ENCODE measurements at regions of chr4 and their contacts with region 1.

Region 1: DNA sequence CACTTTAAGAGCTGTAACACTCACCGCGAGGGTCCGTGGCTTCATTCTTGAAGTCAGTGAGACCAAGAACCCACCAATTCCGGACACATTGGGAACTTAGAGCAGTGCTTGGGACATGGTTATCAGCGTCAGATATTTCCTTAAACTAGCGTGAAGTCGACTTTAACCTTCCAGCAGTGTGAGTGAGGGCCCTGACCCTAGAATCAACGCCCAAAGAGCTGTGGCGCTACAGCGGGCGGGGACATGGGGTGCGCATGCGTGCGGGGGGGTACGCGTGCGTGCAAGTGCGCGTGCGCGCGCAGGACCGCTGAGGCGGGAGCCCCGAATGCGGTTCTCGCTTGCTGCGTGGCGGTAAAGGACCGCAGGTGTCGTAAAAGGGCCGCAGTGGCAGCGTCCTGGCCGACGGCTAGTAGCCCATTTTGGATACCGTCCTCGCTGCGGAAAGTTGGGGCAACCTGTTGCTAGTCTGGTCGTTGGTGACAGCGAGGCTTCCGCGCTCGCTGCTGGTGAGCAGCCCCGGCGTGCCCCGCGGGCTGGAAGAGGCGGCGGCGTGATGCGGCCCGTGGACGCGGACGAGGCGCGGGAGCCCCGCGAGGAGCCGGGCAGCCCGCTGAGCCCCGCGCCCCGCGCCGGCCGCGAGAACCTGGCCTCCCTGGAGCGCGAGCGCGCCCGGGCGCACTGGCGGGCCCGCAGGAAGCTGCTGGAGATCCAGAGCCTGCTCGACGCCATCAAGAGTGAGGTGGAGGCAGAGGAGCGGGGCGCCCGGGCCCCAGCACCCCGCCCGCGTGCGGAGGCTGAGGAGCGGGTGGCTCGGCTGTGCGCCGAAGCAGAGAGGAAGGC is 19.8 kb upstream of the S100P start:
- DNase-seq: peak; percentile 96

Region 2: GRCh38 chr4:6574747-6575502 is 99.0 kb before region 1 on chr4 and contains the start of gene MAN2B2:
- intact Hi-C with region 1: loop called (anchors 10 kb)
- DNase-seq: peak; percentile 95
- total RNA-seq, gene MAN2B2: 18.6 TPM

Region 3: GRCh38 chr4:6608758-6609414 is 65.0 kb before region 1 on chr4:
- intact Hi-C with region 1: no loop called
- DNase-seq: no peak

Region 4: DNA sequence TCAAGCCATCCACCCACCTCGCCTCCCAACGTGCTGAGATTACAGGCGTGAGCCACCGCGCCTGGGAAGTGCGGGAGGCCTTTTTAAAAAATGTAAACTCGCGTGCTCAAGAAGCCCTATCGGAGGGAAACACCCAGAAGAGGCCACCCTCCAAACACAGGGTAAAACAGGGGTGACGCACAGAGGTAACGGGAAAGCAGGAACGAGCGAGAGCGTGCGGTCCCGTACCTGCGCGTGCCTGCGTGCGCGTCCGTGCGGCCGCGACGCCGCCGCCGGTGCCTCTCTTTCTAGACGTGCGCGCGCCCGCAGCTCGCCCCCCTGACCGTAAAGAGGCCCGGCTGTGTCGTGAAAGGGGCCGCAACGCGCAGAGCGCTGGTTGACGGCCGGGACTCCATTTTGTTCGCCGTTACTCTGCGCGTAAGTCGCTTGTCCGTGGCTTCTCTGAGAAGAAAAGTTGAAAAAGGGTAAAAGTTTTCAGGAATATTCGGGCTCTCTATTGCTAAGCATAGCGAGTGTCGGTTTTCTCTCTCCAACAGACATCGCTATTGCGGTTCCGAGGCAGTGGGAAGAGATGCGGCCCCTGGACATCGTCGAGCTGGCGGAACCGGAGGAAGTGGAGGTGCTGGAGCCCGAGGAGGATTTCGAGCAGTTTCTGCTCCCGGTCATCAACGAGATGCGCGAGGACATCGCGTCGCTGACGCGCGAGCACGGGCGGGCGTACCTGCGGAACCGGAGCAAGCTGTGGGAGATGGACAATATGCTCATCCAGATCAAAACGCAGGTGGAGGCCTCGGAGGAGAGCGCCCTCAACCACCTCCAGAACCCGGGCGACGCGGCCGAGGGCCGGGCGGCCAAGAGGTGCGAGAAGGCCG is 33.4 kb before region 1 on chr4 and contains the start of gene MRFAP1:
- intact Hi-C with region 1: loop called (anchors 2 kb)
- DNase-seq: peak; percentile 97
- total RNA-seq, gene MRFAP1: 262 TPM

Region 5: GRCh38 chr4:6709230-6710114 is 35.6 kb after region 1 on chr4 and contains the start of gene MRFAP1L1:
- intact Hi-C with region 1: loop called (anchors 2 kb)
- DNase-seq: peak; percentile 97
- total RNA-seq, gene MRFAP1L1: 48.6 TPM

Measured in cardiac septum (tissue), 1 donor.